ENCODE measurements at regions of chr1 and their contacts with region 1.

Region 1: DNA sequence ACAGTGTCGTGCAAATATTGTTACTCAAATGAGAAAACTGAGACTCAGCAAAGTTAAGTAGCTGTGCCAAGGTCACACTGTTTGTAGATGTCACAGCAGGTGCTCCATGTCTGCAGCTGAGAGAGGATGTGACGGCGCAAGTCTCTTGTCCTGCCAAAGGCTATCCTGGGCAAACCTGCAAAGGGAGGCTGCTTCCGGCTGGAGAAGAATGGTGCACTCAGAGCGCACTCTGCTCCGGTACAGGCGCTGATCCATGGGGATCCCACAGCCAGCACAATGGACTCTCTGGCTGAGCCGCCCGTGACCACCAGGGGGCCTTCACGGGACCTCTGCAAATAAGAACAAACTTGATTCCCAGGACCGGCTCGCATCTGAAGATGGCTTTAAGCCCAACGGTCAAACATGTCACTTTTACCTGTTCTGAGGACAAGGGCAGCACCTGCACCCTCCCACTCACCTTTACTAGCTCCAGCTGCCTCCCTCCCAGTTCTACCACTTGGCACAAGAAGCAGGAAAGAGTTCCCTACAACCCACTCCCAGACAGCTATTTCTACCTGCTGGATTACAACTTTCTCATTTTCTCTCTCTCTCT is 21.9 kb downstream of the RD3 start:
- DNase-seq: peak; percentile 83
- H3K4me3 ChIP-seq: peak overlapping the region in 1 of 2 experiments; percentile 22; a peak in 1 of 4 replicates
- H3K27ac ChIP-seq: no peak overlapping the region
- H3K4me1 ChIP-seq: peaks cover 0 to 12% of the 10 kb centered on the region in 2 experiments; a peak in 2 of 4 replicates
- H3K27me3 ChIP-seq: 0 out of 2 replicates have a peak, but pooled peaks cover 8% of the 10 kb centered on the region
- CTCF ChIP-seq: peak; percentile 90
- EP300 ChIP-seq: no peak
- RAD21 ChIP-seq: peak; percentile 76

Region 2: GRCh38 chr1:211323156-211324063 is 146.6 kb before region 1 on chr1:
- CTCF ChIA-PET with region 1: interaction called, 29 read pairs
- POLR2A ChIA-PET with region 1: no interaction called
- DNase-seq: peak; percentile 75
- H3K4me3 ChIP-seq: no peak overlapping the region; a peak in 1 of 4 replicates
- H3K27ac ChIP-seq: no peak overlapping the region
- H3K4me1 ChIP-seq: peaks cover 0 to 15% of the 10 kb centered on the region in 2 experiments; a peak in 1 of 4 replicates
- H3K27me3 ChIP-seq: no peaks in the 10 kb centered on the region
- CTCF ChIP-seq: peak; percentile 87
- EP300 ChIP-seq: no peak
- RAD21 ChIP-seq: peak; percentile 94

Region 3: DNA sequence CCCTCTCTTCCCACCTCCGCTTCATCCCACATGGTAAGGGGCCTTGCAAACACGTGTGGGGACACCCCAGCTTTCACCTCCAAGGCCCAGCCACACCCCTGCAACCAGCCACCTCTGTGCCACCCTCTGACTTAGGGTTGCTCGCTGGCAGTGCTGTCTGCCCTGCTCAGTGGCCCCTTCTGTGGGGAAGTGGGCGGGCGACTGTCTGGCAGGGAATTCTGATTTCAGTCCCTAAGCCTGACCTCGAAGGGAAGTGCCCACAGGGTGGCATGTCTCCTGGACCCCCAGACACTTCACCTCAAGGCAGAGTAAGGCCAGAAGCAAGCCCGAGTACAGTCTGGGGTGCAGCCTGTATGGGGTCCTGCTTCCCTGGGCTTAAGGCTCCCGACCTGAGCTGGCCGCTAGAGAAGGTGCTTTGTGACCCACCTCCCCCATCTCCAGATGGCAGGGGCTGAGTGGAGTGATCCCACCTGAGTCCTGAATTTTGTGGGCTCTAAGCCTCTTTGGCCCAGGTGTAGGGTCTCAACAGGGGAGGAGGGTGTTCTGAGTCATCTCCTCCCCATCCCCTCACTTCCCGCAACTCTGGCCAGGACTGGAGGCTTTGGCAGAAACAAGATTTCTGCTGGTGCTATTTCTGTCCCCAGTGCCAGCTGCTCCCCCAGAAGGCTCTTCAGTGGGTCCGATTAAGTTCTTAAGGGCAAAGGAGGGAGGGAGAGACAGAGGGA is 14.9 kb after region 1 on chr1:
- CTCF ChIA-PET with region 1: interaction called, 101 read pairs
- POLR2A ChIA-PET with region 1: interaction called, 4 read pairs
- DNase-seq: no peak
- H3K4me3 ChIP-seq: no peak overlapping the region
- H3K27ac ChIP-seq: no peak overlapping the region
- H3K4me1 ChIP-seq: peaks cover 0 to 19% of the 10 kb centered on the region in 2 experiments; a peak in 2 of 4 replicates
- H3K27me3 ChIP-seq: no peaks in the 10 kb centered on the region
- CTCF ChIP-seq: no peak
- EP300 ChIP-seq: no peak
- RAD21 ChIP-seq: no peak

Region 4: GRCh38 chr1:211501711-211502400 is 31.8 kb after region 1 on chr1:
- CTCF ChIA-PET with region 1: interaction called, 17 read pairs
- POLR2A ChIA-PET with region 1: no interaction called
- DNase-seq: no peak
- H3K4me3 ChIP-seq: no peak overlapping the region
- H3K27ac ChIP-seq: no peak overlapping the region
- H3K4me1 ChIP-seq: peaks cover 0 to 3% of the 10 kb centered on the region in 2 experiments; a peak in 1 of 4 replicates
- H3K27me3 ChIP-seq: peaks cover 12% of the 10 kb centered on the region
- CTCF ChIP-seq: no peak
- EP300 ChIP-seq: no peak
- RAD21 ChIP-seq: no peak

Region 5: GRCh38 chr1:211596418-211597181 is 126.6 kb after region 1 on chr1:
- CTCF ChIA-PET with region 1: no interaction called
- POLR2A ChIA-PET with region 1: no interaction called
- DNase-seq: no peak
- H3K4me3 ChIP-seq: no peak overlapping the region
- H3K27ac ChIP-seq: no peak overlapping the region
- H3K4me1 ChIP-seq: peaks cover 0 to 7% of the 10 kb centered on the region in 2 experiments; a peak in 1 of 4 replicates
- H3K27me3 ChIP-seq: no peaks in the 10 kb centered on the region
- CTCF ChIP-seq: no peak
- EP300 ChIP-seq: no peak
- RAD21 ChIP-seq: no peak

Region 6: GRCh38 chr1:211654838-211655787 is 185.1 kb after region 1 on chr1:
- CTCF ChIA-PET with region 1: interaction called, 19 read pairs
- POLR2A ChIA-PET with region 1: no interaction called
- DNase-seq: peak; percentile 83
- H3K4me3 ChIP-seq: no peak overlapping the region; a peak in 1 of 4 replicates
- H3K27ac ChIP-seq: no peak overlapping the region
- H3K4me1 ChIP-seq: peaks cover 0 to 4% of the 10 kb centered on the region in 2 experiments; a peak in 1 of 4 replicates
- H3K27me3 ChIP-seq: no peaks in the 10 kb centered on the region
- CTCF ChIP-seq: peak; percentile 98
- EP300 ChIP-seq: no peak
- RAD21 ChIP-seq: peak; percentile 98

Measured in SK-N-SH (cell line).